Activated naive CD4-positive, alpha-beta T cell treated with anti-CD3 and anti-CD28 coated beads for 36 hours (primary cell): ENCODE measurements at regions of chr3 and their contacts with region 1.

Region 1: DNA sequence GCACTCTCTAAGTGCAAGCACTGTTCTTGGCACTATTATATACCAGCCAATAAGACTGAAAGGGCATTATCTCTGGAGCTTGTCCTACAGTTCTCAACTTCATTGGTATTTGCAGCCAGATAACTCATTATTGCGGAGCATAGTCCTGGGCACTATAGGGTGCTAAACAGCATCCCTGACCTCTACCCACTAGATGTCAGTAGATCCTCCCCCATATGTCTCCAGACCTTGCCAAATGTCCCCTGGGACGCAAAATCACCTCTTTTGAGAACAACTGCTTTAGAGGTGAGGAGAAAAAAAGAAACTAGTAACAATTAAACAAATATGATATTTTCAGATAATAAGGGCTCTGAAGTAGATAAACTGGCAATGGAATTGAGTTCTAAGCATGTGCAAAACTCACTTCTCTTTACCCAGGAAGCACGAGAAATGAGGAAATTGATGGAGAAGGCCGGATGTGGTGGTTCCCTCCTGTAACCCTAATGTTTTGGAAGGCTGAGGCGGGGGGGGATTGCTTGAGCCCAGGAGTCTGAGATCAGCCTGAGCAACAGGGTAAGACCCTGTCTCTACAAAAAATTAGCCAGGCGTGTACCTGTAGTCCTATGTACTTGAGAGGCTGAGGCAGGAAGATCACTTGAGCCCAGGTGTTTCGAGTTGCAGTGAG is 61.4 kb downstream of the FRMD4B start:
- DNase-seq: peak; percentile 18
- H3K4me3 Mint-ChIP-seq: no peak overlapping the region
- H3K27ac Mint-ChIP-seq: no peak overlapping the region
- H3K4me1 Mint-ChIP-seq: peaks cover 43% of the 10 kb centered on the region
- H3K27me3 Mint-ChIP-seq: no peaks in the 10 kb centered on the region

Region 2: DNA sequence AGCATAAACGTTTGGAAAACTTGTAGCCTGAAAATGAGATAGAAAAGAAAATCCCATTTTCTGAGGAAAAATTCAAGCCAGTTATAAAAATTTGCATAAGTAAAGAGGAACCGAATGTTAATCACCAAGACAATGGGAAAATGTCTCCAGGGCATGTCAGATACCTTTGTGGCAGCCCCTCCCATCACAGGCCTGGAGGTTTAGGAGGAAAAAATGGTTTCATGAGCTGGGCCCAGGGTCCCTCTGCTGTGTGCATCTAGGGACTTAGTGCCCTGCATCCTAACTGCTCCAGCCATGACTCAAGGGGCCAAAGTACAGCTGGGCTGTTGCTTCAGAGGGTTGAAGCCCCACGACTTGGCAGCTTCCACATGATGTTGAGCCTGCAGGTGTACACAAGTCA is 545.2 kb before region 1 on chr3:
- CTCF ChIA-PET with region 1: no interaction called
- intact Hi-C with region 1: no loop called
- DNase-seq: no peak
- H3K4me3 Mint-ChIP-seq: no peak overlapping the region
- H3K27ac Mint-ChIP-seq: no peak overlapping the region
- H3K4me1 Mint-ChIP-seq: no peaks in the 10 kb centered on the region
- H3K27me3 Mint-ChIP-seq: peaks cover 1% of the 10 kb centered on the region

Region 3: DNA sequence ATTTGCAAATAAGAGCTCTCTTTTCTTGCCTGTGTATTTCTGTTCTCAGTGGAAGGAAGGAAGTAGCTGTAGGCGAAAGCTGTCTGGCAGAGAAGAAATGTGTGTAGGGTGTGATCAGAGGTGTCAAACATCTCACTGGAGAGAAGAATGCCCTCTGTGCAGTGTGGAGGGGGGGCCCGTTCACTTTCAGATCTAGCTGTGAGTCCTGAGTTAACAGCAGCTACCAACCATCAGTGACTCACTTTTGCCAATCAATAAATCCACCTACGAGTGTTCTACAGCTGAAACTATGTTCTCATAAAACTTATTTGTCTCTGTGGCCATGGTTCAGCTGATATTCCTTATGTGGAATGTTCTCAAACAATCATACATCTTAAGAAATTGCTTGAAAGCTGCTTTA is 42.3 kb before region 1 on chr3:
- CTCF ChIA-PET with region 1: no interaction called
- intact Hi-C with region 1: loop called (anchors 1 kb)
- DNase-seq: peak; percentile 84
- H3K4me3 Mint-ChIP-seq: no peak overlapping the region
- H3K27ac Mint-ChIP-seq: peak overlapping the region; percentile 33
- H3K4me1 Mint-ChIP-seq: peaks cover 21% of the 10 kb centered on the region
- H3K27me3 Mint-ChIP-seq: no peaks in the 10 kb centered on the region

Region 4: GRCh38 chr3:69294014-69294775 is 30.3 kb before region 1 on chr3:
- CTCF ChIA-PET with region 1: no interaction called
- intact Hi-C with region 1: no loop called
- DNase-seq: no peak
- H3K4me3 Mint-ChIP-seq: no peak overlapping the region
- H3K27ac Mint-ChIP-seq: no peak overlapping the region
- H3K4me1 Mint-ChIP-seq: peaks cover 7% of the 10 kb centered on the region
- H3K27me3 Mint-ChIP-seq: no peaks in the 10 kb centered on the region

Region 5: DNA sequence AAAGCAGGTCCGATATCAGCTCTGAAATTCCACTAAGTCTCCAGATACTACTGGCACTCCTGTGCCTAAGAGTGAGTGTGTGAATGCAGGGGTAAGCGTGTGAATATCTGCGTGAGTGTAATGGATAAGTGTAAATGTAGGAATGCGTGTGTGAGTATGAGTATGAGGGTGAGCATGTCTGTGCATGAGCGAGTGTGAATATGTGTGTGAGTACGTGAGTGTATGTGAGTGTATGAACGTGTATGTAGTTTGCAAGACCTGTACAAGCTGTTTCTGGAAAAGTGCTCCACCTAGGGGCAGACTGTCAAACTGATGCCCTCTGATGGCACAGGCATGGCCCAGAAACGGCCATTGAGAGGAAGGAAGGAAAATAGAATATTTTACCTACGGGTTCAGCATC is 85.8 kb after region 1 on chr3:
- CTCF ChIA-PET with region 1: interaction called, 11 read pairs
- intact Hi-C with region 1: loop called (anchors 1 kb)
- DNase-seq: peak; percentile 88
- H3K4me3 Mint-ChIP-seq: no peak overlapping the region
- H3K27ac Mint-ChIP-seq: no peak overlapping the region
- H3K4me1 Mint-ChIP-seq: peaks cover 3% of the 10 kb centered on the region
- H3K27me3 Mint-ChIP-seq: peaks cover 5% of the 10 kb centered on the region

Region 6: DNA sequence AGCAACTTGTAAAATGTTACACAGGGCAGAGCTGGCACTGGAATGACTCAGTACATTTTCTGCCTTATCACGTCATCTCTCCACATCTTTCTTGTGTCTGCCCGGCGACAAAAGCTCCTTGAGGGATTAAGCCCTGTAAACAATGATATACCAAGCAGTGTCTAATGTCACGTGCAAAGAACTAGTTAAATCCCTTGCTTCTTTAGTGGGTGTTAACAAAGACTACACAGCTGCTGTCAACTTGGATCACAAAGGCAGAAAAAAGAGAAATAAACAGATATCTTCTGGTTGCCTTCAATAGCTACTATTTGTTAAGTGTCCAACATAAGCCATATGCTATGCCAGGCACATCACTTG is 109.5 kb after region 1 on chr3:
- CTCF ChIA-PET with region 1: no interaction called
- intact Hi-C with region 1: loop called (anchors 1 kb)
- DNase-seq: peak; percentile 36
- H3K4me3 Mint-ChIP-seq: no peak overlapping the region
- H3K27ac Mint-ChIP-seq: peak overlapping the region; percentile 19
- H3K4me1 Mint-ChIP-seq: peaks cover 40% of the 10 kb centered on the region
- H3K27me3 Mint-ChIP-seq: peaks cover 3% of the 10 kb centered on the region

Region 7: DNA sequence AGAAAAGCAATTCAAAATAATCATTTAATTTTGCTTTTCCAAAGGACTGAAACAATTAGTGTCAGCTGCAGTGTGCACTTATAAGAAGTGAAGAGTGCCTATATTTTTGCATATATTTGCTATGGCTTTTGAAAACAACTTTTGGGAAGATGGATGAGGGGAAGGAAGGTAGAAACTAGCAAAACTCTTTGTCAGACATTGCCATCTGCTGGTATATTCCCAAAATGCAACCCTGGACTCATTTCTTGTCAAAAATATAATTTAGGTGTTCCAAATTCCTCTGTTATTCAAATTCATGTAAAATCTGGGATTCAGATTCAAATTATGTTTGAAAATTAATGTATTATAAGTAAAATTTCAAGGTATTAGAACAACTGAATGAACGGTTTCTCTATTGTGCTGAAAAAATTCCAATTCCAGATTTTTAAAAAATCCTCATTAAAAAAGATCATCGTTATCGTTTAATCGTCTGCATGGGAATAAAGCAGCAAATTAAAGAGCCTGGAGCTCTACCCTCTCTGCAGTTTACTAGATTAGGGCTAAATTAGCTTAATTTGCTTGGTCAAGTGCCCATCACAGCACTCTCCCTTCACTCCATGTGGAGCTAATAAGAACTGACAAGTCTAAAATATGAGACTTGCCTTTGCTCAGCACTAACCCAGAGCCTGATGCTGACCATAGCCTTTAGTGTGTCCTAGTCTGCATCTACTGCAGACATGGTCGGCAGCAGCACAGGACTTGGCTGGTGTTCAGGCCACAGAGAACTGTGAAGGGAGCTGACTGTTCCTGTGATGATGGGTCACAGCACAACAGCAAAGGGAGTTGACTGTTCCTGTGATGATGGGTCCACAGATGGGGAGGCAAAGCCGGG is 346.8 kb after region 1 on chr3:
- CTCF ChIA-PET with region 1: interaction called, 3 read pairs
- intact Hi-C with region 1: loop called (anchors 1 kb)
- DNase-seq: peak; percentile 30
- H3K4me3 Mint-ChIP-seq: no peak overlapping the region
- H3K27ac Mint-ChIP-seq: no peak overlapping the region
- H3K4me1 Mint-ChIP-seq: no peaks in the 10 kb centered on the region
- H3K27me3 Mint-ChIP-seq: no peaks in the 10 kb centered on the region

Region 8: GRCh38 chr3:69855436-69856162 is 531.1 kb after region 1 on chr3:
- CTCF ChIA-PET with region 1: no interaction called
- intact Hi-C with region 1: no loop called
- DNase-seq: no peak
- H3K4me3 Mint-ChIP-seq: no peak overlapping the region
- H3K27ac Mint-ChIP-seq: no peak overlapping the region
- H3K4me1 Mint-ChIP-seq: no peaks in the 10 kb centered on the region
- H3K27me3 Mint-ChIP-seq: no peaks in the 10 kb centered on the region